K562 (cell line): ENCODE measurements at regions of chr13 and their contacts with region 1.

Region 1: DNA sequence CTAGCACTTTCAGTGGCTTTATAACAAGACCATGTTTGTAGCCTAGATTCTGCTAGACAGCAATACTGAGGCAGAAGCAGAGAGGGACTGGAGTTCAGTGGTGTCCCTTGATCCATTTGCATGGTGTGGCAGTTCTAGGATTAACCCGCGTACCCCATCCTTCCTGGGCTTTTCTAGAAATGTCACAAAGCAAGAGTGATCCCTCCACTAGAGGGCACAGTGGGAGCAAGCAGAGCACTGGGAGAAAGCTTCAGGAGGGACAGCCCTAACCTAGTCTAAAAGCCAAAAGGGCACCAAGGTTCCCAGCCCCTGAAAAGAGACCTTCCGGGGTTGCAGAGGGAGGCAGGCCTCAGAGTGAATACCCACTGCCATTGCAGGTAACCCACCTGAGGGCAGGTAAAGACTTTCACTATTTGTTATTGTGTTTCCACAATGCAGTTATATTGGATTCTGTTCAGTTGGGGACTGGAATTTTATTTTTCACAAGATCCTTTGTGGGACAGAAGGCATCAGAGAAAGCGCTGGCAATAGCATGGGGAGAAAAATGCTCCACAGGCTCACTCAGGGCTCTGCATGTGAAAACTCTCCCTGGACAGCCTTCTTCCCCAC is 170.6 kb downstream of the FLT1 start:
- DNase-seq: peak; percentile 43 to 81 (median 62)
- ATAC-seq: peak; percentile 95
- H3K4me3 ChIP-seq: no peak overlapping the region
- H3K27ac ChIP-seq: no peak overlapping the region
- H3K4me1 ChIP-seq: peaks cover 3 to 4% of the 10 kb centered on the region in 2 experiments; a peak in 3 of 5 replicates
- H3K27me3 ChIP-seq: no peaks in the 10 kb centered on the region
- CTCF ChIP-seq: peak; percentile 66 to 77 (median 72)
- EP300 ChIP-seq: no peak
- POLR2A ChIP-seq: no peak
- RAD21 ChIP-seq: peak; percentile 73 to 86

Region 2: GRCh38 chr13:27751953-27752525 is 572.2 kb before region 1 on chr13:
- CTCF ChIA-PET with region 1: no interaction called
- POLR2A ChIA-PET with region 1: no interaction called
- in situ Hi-C with region 1: no loop called
- intact Hi-C with region 1: no loop called
- DNase-seq: no peak
- ATAC-seq: no peak
- H3K4me3 ChIP-seq: no peak overlapping the region
- H3K27ac ChIP-seq: no peak overlapping the region
- H3K4me1 ChIP-seq: no peaks in the 10 kb centered on the region
- H3K27me3 ChIP-seq: peaks cover 0 to 12% of the 10 kb centered on the region in 2 experiments; a peak in 2 of 5 replicates
- CTCF ChIP-seq: no peak
- EP300 ChIP-seq: no peak
- POLR2A ChIP-seq: no peak
- RAD21 ChIP-seq: no peak

Region 3: GRCh38 chr13:28489524-28489931 is 165.2 kb after region 1 on chr13:
- CTCF ChIA-PET with region 1: no interaction called
- POLR2A ChIA-PET with region 1: no interaction called
- in situ Hi-C with region 1: no loop called
- intact Hi-C with region 1: loop called (anchors 10 kb)
- DNase-seq: no peak
- ATAC-seq: no peak
- H3K4me3 ChIP-seq: no peak overlapping the region
- H3K27ac ChIP-seq: no peak overlapping the region
- H3K4me1 ChIP-seq: peaks cover 0 to 9% of the 10 kb centered on the region in 2 experiments; a peak in 3 of 5 replicates
- H3K27me3 ChIP-seq: peaks cover 3 to 10% of the 10 kb centered on the region in 2 experiments; a peak in 4 of 5 replicates
- CTCF ChIP-seq: no peak
- EP300 ChIP-seq: no peak
- POLR2A ChIP-seq: no peak
- RAD21 ChIP-seq: no peak

Region 4: DNA sequence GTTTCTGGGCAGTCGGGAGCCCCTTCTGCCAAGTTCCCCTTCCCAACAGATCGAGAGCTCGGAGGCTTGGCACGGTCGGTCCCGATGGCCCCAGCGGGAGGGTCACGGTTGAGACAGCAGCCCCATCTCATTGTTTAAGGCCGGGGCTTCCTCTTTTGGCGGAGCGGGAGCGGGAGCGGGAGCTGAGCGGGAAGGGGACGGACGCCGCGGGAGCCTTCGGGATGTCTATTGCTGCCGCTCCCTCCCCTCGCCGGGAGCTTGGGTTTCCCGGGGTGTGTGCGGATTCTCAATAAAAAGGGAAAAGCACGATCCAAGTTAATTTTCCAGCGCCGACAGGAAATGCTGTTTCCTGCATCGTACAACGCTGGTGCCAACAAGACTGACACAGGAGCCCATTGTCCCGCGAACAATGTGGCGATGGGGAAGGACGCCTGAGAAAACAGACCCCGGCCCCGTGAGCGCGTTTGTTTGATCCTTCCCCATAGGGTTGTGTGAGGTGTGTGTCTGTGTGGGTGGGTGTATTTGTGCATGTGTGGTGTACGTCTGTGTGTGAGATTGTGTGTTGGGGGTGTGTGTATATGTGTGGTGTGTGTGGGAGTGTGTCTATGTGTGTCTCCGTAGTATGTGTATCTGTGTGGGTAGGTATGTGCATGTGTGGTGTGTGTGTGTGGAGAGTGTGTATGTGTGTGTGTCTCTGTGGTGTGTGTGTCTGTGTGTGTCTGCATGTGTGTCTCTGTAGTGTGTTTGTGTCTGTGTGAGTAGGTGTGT is 207.0 kb after region 1 on chr13:
- CTCF ChIA-PET with region 1: no interaction called
- POLR2A ChIA-PET with region 1: no interaction called
- in situ Hi-C with region 1: no loop called
- intact Hi-C with region 1: loop called (anchors 10 kb)
- DNase-seq: no peak
- ATAC-seq: no peak
- H3K4me3 ChIP-seq: no peak overlapping the region
- H3K27ac ChIP-seq: peak overlapping the region; percentile 49; the same call in 1 of the 3 replicates
- H3K4me1 ChIP-seq: peaks cover 4 to 21% of the 10 kb centered on the region in 2 experiments; a peak in 4 of 5 replicates
- H3K27me3 ChIP-seq: no peaks in the 10 kb centered on the region
- CTCF ChIP-seq: no peak
- EP300 ChIP-seq: no peak
- POLR2A ChIP-seq: no peak
- RAD21 ChIP-seq: no peak